ENCODE measurements at regions of chr15 and their contacts with region 1.

Region 1: GRCh38 chr15:94655249-94655880 is 424.0 kb downstream of the MCTP2 start:
- DNase-seq: no peak
- H3K4me3 Mint-ChIP-seq: no peak overlapping the region
- H3K27ac Mint-ChIP-seq: no peak overlapping the region
- H3K4me1 Mint-ChIP-seq: no peaks in the 10 kb centered on the region
- H3K27me3 Mint-ChIP-seq: no peaks in the 10 kb centered on the region
- CTCF ChIP-seq: no peak

Region 2: DNA sequence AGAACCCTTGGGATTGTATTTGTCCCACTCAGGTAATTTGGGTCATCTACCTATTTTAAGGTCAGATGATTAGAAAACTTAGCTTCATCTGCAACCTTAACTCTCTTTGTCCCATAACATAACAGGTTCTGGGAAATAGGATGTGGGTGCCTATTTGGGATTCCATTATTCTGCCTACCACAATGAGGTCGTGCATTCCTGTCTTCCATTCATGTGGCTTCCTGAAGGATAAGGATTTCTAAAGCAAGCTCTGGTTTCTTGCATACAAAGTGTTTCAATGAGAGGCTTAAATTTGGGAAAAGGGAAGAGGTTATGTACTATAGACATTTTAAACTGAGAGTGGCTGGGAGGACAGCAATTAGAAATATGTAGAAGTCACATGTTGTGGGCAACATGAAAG is 233.7 kb before region 1 on chr15:
- CTCF ChIA-PET with region 1: no interaction called
- intact Hi-C with region 1: loop called (anchors 10 kb)
- DNase-seq: no peak
- H3K4me3 Mint-ChIP-seq: no peak overlapping the region
- H3K27ac Mint-ChIP-seq: no peak overlapping the region
- H3K4me1 Mint-ChIP-seq: no peaks in the 10 kb centered on the region
- H3K27me3 Mint-ChIP-seq: no peaks in the 10 kb centered on the region
- CTCF ChIP-seq: no peak

Region 3: DNA sequence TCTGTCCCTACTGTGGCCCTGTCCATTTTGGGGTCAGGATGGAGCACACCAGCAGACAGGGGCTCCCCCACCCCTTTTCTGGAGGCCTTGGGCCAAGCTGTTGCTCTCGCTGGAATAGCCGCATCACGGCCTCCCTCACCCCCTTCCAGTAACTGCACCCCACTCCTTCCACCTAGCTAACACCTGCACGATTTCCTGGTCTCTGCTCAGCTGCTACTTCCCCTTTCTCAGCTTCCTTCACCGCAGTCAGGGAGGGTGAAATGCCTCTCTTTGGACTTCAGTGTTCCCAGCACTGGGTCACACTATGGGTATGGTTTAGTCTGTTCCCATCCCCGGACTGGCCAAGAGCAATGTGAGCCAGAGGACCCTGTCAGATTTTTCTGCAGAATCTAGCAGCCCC is 23.8 kb before region 1 on chr15:
- CTCF ChIA-PET with region 1: no interaction called
- intact Hi-C with region 1: no loop called
- DNase-seq: no peak
- H3K4me3 Mint-ChIP-seq: no peak overlapping the region
- H3K27ac Mint-ChIP-seq: no peak overlapping the region
- H3K4me1 Mint-ChIP-seq: no peaks in the 10 kb centered on the region
- H3K27me3 Mint-ChIP-seq: no peaks in the 10 kb centered on the region
- CTCF ChIP-seq: no peak

Region 4: GRCh38 chr15:94736236-94736635 is 80.9 kb after region 1 on chr15:
- CTCF ChIA-PET with region 1: no interaction called
- intact Hi-C with region 1: no loop called
- DNase-seq: no peak
- H3K4me3 Mint-ChIP-seq: no peak overlapping the region
- H3K27ac Mint-ChIP-seq: no peak overlapping the region
- H3K4me1 Mint-ChIP-seq: no peaks in the 10 kb centered on the region
- H3K27me3 Mint-ChIP-seq: no peaks in the 10 kb centered on the region
- CTCF ChIP-seq: no peak